Activated B cell treated with CpG ODN at 0.5 μM for 24 hours (primary cell): ENCODE measurements at regions of chr17 and their contacts with region 1.

Region 1: DNA sequence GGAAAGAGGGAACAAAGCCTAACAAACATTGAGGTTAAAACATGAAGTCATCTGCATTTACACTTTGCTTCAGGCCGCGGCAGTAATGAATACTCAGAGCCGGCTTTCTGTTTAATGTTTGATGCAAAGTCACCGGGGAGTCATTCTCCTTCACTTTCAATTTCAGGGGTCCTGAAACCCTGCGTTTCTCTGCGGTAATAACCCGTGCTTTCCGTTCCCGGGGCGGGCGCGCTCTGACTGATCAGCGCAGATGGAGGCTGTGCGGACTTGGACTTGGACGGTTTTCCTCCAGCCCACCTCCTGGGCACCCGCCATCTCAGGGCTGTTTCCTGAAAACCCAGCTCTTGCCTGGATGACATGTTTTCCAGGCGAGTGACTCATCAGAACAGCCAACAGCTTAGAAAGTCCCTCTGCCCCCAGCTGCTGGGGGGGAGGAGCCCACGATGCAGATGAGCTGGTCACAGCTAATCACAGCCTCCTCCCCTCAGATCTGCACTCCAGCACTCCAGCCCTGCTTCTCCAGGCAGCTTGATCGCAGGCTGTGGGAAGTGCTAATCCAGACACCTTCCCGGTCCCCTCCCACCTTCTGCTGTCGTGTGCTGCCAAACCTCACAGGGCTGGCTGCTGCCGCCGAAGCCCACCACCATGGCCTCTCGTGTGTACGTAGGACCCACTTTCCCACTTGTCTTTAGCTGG is 158.6 kb upstream of the CHMP6 start:
- DNase-seq: peak; percentile 71
- ATAC-seq: peak; percentile 89
- H3K4me3 Mint-ChIP-seq: peak overlapping the region; percentile 94
- H3K27ac Mint-ChIP-seq: peak overlapping the region; percentile 98
- H3K4me1 Mint-ChIP-seq: peaks cover 23% of the 10 kb centered on the region
- H3K27me3 Mint-ChIP-seq: no peaks in the 10 kb centered on the region
- CTCF ChIP-seq: no peak

Region 2: GRCh38 chr17:79573196-79573896 is 1259.7 kb before region 1 on chr17:
- CTCF ChIA-PET with region 1: no interaction called
- POLR2A ChIA-PET with region 1: no interaction called
- intact Hi-C with region 1: no loop called
- DNase-seq: no peak
- ATAC-seq: no peak
- H3K4me3 Mint-ChIP-seq: no peak overlapping the region
- H3K27ac Mint-ChIP-seq: no peak overlapping the region
- H3K4me1 Mint-ChIP-seq: no peaks in the 10 kb centered on the region
- H3K27me3 Mint-ChIP-seq: peaks cover 7% of the 10 kb centered on the region
- CTCF ChIP-seq: no peak

Region 3: DNA sequence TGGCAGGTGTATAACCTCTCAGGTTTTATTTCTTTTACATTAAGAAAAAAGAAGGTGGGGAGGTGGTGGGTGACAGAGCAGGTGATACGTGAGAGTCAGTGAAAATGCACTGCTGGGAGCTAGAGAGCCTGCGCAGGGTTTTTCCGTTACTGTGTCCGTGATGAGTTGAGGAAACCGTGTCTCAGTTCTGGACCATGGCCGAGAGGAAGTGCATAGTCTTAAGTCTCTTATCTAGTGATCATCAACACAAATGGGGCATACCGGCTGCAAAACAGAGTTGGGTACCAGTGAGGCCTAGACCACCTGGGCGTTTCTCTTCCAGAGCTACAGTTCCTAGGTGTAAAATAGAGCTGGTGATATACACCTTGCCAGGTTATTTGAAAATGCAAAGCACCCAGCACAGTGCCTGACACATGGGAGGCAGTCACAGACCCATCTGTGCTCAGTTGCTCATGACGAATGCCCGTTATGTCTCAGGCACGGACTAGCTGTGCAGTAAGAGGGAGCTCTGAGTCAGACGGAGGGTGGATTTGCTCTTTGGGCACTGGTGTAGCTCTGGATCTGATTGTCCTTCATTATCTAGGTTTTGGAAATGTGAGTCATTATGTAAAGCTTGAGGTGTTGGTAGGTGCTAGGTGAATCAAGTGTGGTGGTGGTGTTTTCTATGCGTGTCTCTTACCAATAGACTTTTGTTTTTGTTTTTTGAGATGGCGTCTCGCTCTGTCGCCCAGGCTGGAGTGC is 227.5 kb before region 1 on chr17:
- CTCF ChIA-PET with region 1: no interaction called
- POLR2A ChIA-PET with region 1: no interaction called
- intact Hi-C with region 1: loop called (anchors 2 kb)
- DNase-seq: peak; percentile 25
- ATAC-seq: peak; percentile 94
- H3K4me3 Mint-ChIP-seq: peak overlapping the region; percentile 48
- H3K27ac Mint-ChIP-seq: peak overlapping the region; percentile 79
- H3K4me1 Mint-ChIP-seq: peaks cover 53% of the 10 kb centered on the region
- H3K27me3 Mint-ChIP-seq: no peaks in the 10 kb centered on the region
- CTCF ChIP-seq: no peak

Region 4: DNA sequence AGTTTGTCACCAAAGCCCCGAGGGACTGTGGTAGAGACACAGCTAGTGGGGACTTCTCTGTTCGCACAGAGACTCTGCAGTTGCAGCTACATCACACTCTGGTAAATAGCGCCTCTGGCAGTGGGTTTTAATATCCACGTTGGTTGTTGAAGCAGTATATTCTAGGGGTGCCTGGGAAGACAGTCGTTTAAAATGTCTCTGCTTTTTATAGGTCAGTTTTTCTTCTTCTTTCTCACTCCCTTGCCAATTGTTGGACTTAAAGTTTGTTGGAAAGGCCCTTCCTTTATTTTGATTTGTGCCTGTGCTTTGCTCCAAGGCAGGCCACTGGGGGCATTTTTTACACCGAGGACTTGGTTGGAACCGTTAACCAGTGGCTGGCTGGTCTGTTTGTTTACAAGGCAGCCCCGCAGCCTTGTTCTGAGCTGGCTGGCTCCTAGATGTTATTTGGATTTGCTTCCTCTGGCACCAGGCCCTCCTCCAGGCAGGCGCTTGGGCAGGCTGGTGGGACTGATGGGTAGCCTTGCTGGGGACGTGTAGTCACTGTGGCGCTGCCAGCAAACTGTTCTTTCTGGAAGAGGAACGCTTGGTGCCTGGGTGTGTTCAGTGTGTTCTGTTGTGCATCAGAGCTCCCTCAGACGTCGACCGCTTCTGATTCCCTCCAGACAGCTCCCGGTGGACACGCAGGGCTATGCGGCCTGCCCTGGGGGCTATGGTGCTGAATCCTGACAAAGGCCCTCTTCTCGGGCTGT is 59.6 kb before region 1 on chr17:
- CTCF ChIA-PET with region 1: no interaction called
- POLR2A ChIA-PET with region 1: no interaction called
- intact Hi-C with region 1: loop called (anchors 5 kb)
- DNase-seq: no peak
- ATAC-seq: peak; percentile 62
- H3K4me3 Mint-ChIP-seq: no peak overlapping the region
- H3K27ac Mint-ChIP-seq: peak overlapping the region; percentile 2
- H3K4me1 Mint-ChIP-seq: peaks cover 33% of the 10 kb centered on the region
- H3K27me3 Mint-ChIP-seq: no peaks in the 10 kb centered on the region
- CTCF ChIP-seq: no peak

Region 5: DNA sequence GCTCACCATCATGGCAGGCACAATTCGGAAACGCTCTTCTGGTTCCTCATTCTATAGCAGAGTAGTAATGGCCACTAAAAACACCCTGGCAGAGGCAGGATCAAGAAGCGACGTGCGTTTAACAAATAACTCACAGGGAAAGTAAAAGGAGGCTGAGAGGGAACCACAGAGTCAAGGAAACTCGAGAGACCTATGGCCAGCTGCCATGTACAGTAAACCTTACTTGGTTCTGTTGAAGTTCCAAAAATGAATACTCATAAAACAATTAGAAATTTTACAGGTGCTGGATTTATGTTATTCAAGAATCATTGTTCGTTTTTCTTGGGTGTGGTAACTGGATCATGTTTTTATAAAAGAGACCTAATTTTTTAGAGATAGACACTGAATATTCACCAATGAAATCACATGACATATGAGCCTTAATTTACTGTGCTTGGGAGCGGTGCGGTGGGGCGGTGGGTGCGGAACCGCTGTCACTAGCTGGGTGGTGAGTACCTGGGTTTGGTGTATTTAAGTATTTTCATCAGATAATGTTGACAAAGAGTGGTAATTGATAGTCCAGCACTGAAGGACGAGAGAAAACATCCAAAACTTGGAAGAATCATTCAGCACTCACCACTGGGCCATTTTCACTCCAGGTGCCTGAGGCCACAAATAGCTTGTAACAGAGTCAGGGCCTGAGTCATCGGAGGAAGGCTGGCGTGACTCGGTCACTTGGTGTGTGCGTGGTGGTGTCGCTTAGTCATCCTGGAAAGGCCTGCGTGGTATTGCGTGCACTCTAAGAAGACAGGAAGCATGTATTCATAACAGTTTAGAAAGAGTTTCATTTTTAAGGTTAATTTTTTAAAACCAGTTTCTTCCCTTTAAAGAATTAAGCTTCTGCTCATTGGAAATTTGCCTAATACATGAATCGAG is 23.2 kb after region 1 on chr17:
- CTCF ChIA-PET with region 1: interaction called, 3 read pairs
- POLR2A ChIA-PET with region 1: interaction called, 5 read pairs
- intact Hi-C with region 1: loop called (anchors 1 kb)
- DNase-seq: no peak
- ATAC-seq: peak; percentile 95
- H3K4me3 Mint-ChIP-seq: no peak overlapping the region
- H3K27ac Mint-ChIP-seq: peak overlapping the region; percentile 69
- H3K4me1 Mint-ChIP-seq: peaks cover 18% of the 10 kb centered on the region
- H3K27me3 Mint-ChIP-seq: no peaks in the 10 kb centered on the region
- CTCF ChIP-seq: no peak

Region 6: DNA sequence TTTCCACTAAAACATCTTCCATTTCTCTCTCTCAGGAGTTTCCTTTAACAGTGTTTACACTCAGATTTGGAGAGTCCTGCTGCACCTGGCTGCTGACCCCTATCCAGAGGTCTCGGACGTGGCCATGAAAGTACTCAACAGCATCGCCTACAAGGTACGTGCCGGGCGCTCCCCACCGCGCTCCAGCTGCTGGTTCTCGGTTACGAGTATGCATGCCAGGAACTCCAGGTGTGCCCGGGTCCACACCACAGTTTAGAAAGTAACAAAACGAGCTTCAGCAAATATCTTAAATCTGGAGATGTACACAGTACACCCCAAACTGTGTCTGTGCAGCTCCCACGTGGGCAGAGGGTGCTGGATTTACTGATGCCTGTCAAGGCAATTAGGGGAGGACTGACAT is 75.7 kb after region 1 on chr17:
- CTCF ChIA-PET with region 1: no interaction called
- POLR2A ChIA-PET with region 1: interaction called, 10 read pairs
- intact Hi-C with region 1: loop called (anchors 1 kb)
- DNase-seq: no peak
- ATAC-seq: no peak
- H3K4me3 Mint-ChIP-seq: no peak overlapping the region
- H3K27ac Mint-ChIP-seq: no peak overlapping the region
- H3K4me1 Mint-ChIP-seq: peaks cover 56% of the 10 kb centered on the region
- H3K27me3 Mint-ChIP-seq: no peaks in the 10 kb centered on the region
- CTCF ChIP-seq: no peak